CD8-positive, alpha-beta T cell (primary cell): ENCODE measurements at regions of chr2 and their contacts with region 1.

Region 1: GRCh38 chr2:203740780-203741281 is 34.4 kb downstream of the CD28 start:
- DNase-seq: peak in 6 of 9 experiments; percentile 22 to 89 (median 48)
- ATAC-seq: peak; percentile 83
- H3K4me3 ChIP-seq: no peak overlapping the region
- H3K4me3 Mint-ChIP-seq: peak overlapping the region; percentile 70
- H3K27ac ChIP-seq: peak overlapping the region; percentile 63 to 77
- H3K27ac Mint-ChIP-seq: peak overlapping the region; percentile 95
- H3K4me1 ChIP-seq: peaks cover 67% of the 10 kb centered on the region
- H3K4me1 Mint-ChIP-seq: peaks cover 82% of the 10 kb centered on the region
- H3K27me3 ChIP-seq: no peaks in the 10 kb centered on the region
- H3K27me3 Mint-ChIP-seq: no peaks in the 10 kb centered on the region
- CTCF ChIP-seq: no peak

Region 2: DNA sequence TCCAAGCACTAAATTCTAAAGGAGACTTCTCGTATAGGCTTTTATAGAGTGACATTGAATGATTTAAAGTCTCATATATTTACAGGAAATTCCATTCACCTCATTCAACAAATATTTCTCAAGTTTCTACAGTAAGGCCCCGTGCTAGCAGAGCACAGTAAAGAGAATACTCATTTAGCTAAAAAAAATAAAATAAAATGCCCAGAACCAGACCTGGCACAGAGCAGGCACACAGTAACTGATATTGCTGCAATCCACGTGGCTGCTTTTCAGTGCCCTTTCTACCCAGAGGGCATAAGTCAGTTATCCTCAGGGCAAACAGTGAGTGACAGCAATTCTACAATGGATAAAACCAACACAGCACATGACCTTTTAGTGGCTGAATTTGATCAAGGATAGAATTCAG is 1555.0 kb before region 1 on chr2:
- CTCF ChIA-PET with region 1: no interaction called
- POLR2A ChIA-PET with region 1: no interaction called
- intact Hi-C with region 1: no loop called
- DNase-seq: no peak
- ATAC-seq: no peak
- H3K4me3 ChIP-seq: no peak overlapping the region
- H3K4me3 Mint-ChIP-seq: no peak overlapping the region
- H3K27ac ChIP-seq: no peak overlapping the region
- H3K27ac Mint-ChIP-seq: no peak overlapping the region
- H3K4me1 ChIP-seq: no peaks in the 10 kb centered on the region
- H3K4me1 Mint-ChIP-seq: no peaks in the 10 kb centered on the region
- H3K27me3 ChIP-seq: no peaks in the 10 kb centered on the region
- H3K27me3 Mint-ChIP-seq: peaks cover 19% of the 10 kb centered on the region
- CTCF ChIP-seq: no peak

Region 3: GRCh38 chr2:203718087-203718486 is 22.7 kb before region 1 on chr2:
- CTCF ChIA-PET with region 1: interaction called, 51 read pairs
- POLR2A ChIA-PET with region 1: interaction called, 102 read pairs
- intact Hi-C with region 1: loop called (anchors 1 to 2 kb)
- DNase-seq: peak in 7 of 9 experiments; percentile 42 to 83 (median 68)
- ATAC-seq: peak; percentile 42
- H3K4me3 ChIP-seq: peak overlapping the region in 1 of 2 experiments; percentile 10
- H3K4me3 Mint-ChIP-seq: peak overlapping the region; percentile 59
- H3K27ac ChIP-seq: peak overlapping the region; percentile 39 to 57
- H3K27ac Mint-ChIP-seq: peak overlapping the region; percentile 95
- H3K4me1 ChIP-seq: peaks cover 98% of the 10 kb centered on the region
- H3K4me1 Mint-ChIP-seq: peaks cover 98% of the 10 kb centered on the region
- H3K27me3 ChIP-seq: no peaks in the 10 kb centered on the region
- H3K27me3 Mint-ChIP-seq: no peaks in the 10 kb centered on the region
- CTCF ChIP-seq: no peak

Region 4: GRCh38 chr2:203730076-203730729 is 10.6 kb before region 1 on chr2:
- CTCF ChIA-PET with region 1: interaction called, 7 read pairs
- POLR2A ChIA-PET with region 1: interaction called, 37 read pairs
- intact Hi-C with region 1: loop called in 1 of 2 experiments (anchors 1 kb)
- DNase-seq: no peak
- ATAC-seq: peak; percentile 43
- H3K4me3 ChIP-seq: no peak overlapping the region
- H3K4me3 Mint-ChIP-seq: peak overlapping the region; percentile 42
- H3K27ac ChIP-seq: no peak overlapping the region
- H3K27ac Mint-ChIP-seq: peak overlapping the region; percentile 63
- H3K4me1 ChIP-seq: peaks cover 58% of the 10 kb centered on the region
- H3K4me1 Mint-ChIP-seq: peaks cover 88% of the 10 kb centered on the region
- H3K27me3 ChIP-seq: no peaks in the 10 kb centered on the region
- H3K27me3 Mint-ChIP-seq: no peaks in the 10 kb centered on the region
- CTCF ChIP-seq: no peak

Region 5: DNA sequence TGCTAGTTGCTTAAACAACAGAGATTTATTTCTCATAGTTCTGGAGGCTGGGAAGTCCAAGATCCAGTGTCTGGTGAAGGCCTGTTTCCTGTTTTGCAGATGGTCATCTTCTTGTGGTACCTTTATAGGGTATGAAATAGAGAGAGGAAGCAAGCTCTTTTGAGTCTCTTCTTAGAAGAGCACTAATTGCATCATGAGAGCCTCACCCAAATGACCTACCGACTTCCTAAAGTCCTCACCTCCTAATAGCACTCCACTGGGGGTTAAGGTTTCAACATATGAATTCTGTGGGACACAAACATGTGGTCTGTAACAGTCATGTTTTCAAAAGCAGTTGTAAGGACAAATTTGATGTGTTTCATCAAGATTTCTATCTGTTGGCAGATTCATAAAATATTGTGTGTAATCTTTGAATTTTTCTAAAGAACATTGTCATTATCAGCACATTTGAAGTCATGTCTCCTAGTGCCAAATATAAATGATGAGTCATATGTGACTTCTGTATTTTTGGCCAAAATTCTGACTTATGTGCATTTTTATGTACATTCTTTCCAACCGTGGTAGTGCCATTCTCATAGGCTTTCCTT is 10.9 kb after region 1 on chr2:
- CTCF ChIA-PET with region 1: interaction called, 3 read pairs
- POLR2A ChIA-PET with region 1: interaction called, 23 read pairs
- intact Hi-C with region 1: loop called in 1 of 2 experiments (anchors 1 kb)
- DNase-seq: no peak
- ATAC-seq: no peak
- H3K4me3 ChIP-seq: no peak overlapping the region
- H3K4me3 Mint-ChIP-seq: no peak overlapping the region
- H3K27ac ChIP-seq: no peak overlapping the region
- H3K27ac Mint-ChIP-seq: peak overlapping the region; percentile 43
- H3K4me1 ChIP-seq: peaks cover 13% of the 10 kb centered on the region
- H3K4me1 Mint-ChIP-seq: peaks cover 53% of the 10 kb centered on the region
- H3K27me3 ChIP-seq: no peaks in the 10 kb centered on the region
- H3K27me3 Mint-ChIP-seq: no peaks in the 10 kb centered on the region
- CTCF ChIP-seq: no peak

Region 6: DNA sequence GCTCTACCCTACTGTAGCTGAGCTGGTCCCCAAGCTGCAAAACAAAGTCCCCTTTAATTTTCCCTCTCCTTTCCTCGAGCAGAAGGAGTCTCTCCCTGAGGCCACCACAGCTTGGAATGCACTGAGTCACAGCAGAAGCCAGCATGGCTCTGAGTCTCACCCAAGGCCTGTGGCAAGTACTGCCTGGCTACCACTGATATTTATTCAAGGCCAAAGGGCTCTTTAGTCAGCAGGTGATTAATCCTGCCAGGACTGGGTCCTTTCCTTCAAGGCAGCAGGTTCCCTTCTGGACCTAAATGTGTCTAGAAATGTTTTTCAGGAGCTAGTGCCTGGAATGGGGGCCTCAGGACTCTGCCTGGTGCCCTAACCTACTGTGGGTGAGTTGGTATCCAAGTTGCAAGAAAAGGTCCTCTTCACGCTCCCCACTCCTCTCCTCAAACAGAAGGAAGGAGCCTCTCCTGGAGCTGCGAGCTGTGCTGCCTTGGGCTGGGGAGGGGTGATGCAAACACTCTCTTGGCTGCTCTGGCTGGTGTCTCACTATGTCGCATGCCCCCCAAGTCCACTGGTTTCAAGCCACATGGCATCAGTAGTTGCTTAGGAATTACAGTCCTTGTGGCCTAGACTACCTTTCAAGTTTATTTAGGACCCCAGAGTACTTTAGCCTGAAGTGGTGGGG is 19.0 kb after region 1 on chr2:
- CTCF ChIA-PET with region 1: interaction called, 3 read pairs
- POLR2A ChIA-PET with region 1: interaction called, 7 read pairs
- intact Hi-C with region 1: loop called (anchors 2 kb)
- DNase-seq: no peak
- ATAC-seq: no peak
- H3K4me3 ChIP-seq: no peak overlapping the region
- H3K4me3 Mint-ChIP-seq: no peak overlapping the region
- H3K27ac ChIP-seq: no peak overlapping the region
- H3K27ac Mint-ChIP-seq: no peak overlapping the region
- H3K4me1 ChIP-seq: peaks cover 22% of the 10 kb centered on the region
- H3K4me1 Mint-ChIP-seq: peaks cover 51% of the 10 kb centered on the region
- H3K27me3 ChIP-seq: no peaks in the 10 kb centered on the region
- H3K27me3 Mint-ChIP-seq: no peaks in the 10 kb centered on the region
- CTCF ChIP-seq: no peak